ENCODE measurements at regions of chr9 and their contacts with region 1.

Region 1: GRCh38 chr9:125631391-125632085 is 75.5 kb downstream of the MAPKAP1 start:
- DNase-seq: peak; percentile 54
- H3K4me3 Mint-ChIP-seq: no peak overlapping the region
- H3K27ac Mint-ChIP-seq: peak overlapping the region; percentile 67
- H3K4me1 Mint-ChIP-seq: peaks cover 75% of the 10 kb centered on the region
- H3K27me3 Mint-ChIP-seq: no peaks in the 10 kb centered on the region

Region 2: DNA sequence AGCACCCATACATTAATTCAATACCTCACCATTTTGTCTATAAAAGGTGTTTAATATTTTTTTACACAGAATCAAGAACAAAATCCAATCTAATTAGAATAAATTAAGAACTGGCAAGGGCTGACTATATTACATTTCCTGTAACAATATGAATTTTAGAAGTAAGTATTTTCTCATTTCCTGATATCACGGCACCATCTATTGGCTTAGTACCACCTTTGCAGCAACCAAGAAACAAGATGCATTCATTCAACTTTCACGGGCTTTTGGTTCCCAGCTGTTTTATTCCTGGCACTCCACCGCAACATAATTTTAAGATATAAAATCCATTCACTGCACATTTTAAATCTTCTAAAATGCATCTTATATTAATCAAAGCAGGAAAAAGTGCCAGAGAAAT is 1236.9 kb before region 1 on chr9:
- CTCF ChIA-PET with region 1: interaction called, 10 read pairs
- intact Hi-C with region 1: no loop called
- DNase-seq: no peak
- H3K4me3 Mint-ChIP-seq: no peak overlapping the region
- H3K27ac Mint-ChIP-seq: no peak overlapping the region
- H3K4me1 Mint-ChIP-seq: peaks cover 61% of the 10 kb centered on the region
- H3K27me3 Mint-ChIP-seq: no peaks in the 10 kb centered on the region

Region 3: DNA sequence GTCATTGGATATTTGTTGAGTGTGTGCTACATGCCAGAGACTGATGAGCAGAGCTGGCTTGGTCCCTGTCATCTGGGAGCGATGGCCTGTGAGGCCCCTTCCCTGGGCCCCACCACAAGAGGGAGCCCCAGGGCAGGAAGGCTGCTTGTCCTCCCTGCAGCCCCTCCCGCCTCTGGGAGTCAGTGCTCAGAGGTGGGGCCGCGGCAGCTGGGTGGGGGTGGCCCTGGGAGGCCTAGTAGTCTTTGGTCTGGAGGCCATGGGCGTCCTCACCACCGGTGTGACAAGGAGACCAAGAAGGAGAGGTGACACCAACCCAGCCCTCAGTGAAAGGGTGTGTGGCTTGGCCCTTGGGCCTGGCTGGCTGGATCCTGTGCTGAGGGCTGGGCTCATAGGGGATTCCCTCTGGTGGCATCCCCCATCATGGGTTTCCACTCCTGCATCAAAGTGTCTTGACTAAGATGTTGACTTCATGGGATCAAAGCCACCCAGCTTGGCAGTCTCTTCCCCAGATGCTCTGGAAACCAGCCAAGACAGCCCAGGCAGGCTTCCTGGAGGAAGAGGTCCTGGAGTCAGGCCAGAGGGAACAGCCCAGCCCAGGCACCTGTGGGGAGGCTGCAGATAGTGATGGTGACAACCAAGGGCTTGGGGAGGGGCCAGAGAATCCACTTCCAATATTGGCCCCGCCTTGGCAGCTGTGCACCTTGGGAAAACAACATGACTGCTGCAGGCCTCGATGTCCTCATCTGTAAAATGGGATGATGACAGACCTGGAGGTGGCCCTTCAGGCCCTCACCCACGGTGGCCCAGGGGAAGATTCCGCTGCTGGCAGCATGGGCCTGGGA is 203.3 kb before region 1 on chr9:
- CTCF ChIA-PET with region 1: no interaction called
- intact Hi-C with region 1: loop called (anchors 1 kb)
- DNase-seq: peak; percentile 29
- H3K4me3 Mint-ChIP-seq: no peak overlapping the region
- H3K27ac Mint-ChIP-seq: no peak overlapping the region
- H3K4me1 Mint-ChIP-seq: no peaks in the 10 kb centered on the region
- H3K27me3 Mint-ChIP-seq: no peaks in the 10 kb centered on the region

Region 4: GRCh38 chr9:125558453-125559092 is 73.0 kb before region 1 on chr9:
- CTCF ChIA-PET with region 1: interaction called, 10 read pairs
- intact Hi-C with region 1: loop called (anchors 1 kb)
- DNase-seq: peak; percentile 81
- H3K4me3 Mint-ChIP-seq: no peak overlapping the region
- H3K27ac Mint-ChIP-seq: no peak overlapping the region
- H3K4me1 Mint-ChIP-seq: peaks cover 11% of the 10 kb centered on the region
- H3K27me3 Mint-ChIP-seq: no peaks in the 10 kb centered on the region

Region 5: DNA sequence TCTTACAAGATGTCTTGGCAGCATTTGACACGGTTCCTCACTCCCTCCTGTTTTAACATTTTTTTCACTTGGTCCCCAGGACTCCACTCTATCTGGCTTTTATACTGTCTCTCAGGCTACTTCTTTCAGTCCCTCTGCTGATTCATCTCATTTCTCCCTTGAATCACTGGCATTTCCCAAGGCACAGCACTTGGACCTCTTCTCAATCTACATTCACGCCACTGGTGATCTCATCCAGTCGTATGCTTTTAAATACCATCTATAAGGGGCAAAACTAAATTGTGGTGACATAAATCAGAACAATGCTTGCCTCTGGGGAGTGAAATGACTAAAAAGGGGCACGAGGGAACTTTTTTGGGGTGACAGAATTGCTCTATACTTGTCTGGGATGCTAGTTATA is 28.4 kb after region 1 on chr9:
- CTCF ChIA-PET with region 1: no interaction called
- intact Hi-C with region 1: loop called (anchors 1 kb)
- DNase-seq: peak; percentile 49
- H3K4me3 Mint-ChIP-seq: no peak overlapping the region
- H3K27ac Mint-ChIP-seq: no peak overlapping the region
- H3K4me1 Mint-ChIP-seq: peaks cover 15% of the 10 kb centered on the region
- H3K27me3 Mint-ChIP-seq: no peaks in the 10 kb centered on the region

Region 6: GRCh38 chr9:125746017-125746773 is 114.7 kb after region 1 on chr9:
- CTCF ChIA-PET with region 1: no interaction called
- intact Hi-C with region 1: loop called (anchors 2 kb)
- DNase-seq: peak; percentile 93
- H3K4me3 Mint-ChIP-seq: peak overlapping the region; percentile 91
- H3K27ac Mint-ChIP-seq: peak overlapping the region; percentile 90
- H3K4me1 Mint-ChIP-seq: peaks cover 25% of the 10 kb centered on the region
- H3K27me3 Mint-ChIP-seq: peaks cover 6% of the 10 kb centered on the region

Region 7: DNA sequence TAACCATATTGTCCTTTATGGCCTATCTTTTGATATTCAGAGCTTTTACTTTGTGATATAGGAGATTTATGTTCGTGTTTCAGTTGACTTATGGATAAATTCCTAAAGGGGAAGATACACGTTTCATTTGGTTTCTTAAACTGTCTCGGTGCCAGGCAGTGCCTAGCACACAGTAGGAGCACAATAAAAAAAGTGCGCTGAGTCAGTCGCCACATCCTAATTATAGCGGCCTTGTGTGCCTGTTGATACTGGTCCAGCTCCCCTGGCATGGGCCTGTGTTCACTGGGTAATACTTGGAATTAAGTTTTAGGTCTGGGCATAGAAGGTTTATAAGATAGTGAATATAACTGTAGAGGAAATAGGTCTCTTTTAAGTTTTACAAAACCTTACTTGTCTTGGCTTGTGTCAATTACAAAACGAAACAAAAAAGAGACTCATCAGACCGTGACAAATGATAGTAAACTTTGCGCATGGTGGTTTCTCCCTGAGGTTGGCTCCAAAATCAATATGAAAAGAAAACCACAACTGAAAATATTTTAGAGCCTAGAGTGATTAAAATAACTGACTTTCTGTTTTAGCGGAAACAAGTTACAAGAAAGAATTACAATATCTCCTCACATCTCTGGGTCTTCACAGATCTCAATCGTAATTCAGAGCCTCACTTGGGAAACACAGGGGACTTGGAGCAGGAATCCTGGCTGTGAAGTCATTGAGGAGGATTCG is 779.8 kb after region 1 on chr9:
- CTCF ChIA-PET with region 1: no interaction called
- intact Hi-C with region 1: loop called (anchors 2 kb)
- DNase-seq: peak; percentile 68
- H3K4me3 Mint-ChIP-seq: peak overlapping the region; percentile 35
- H3K27ac Mint-ChIP-seq: peak overlapping the region; percentile 72
- H3K4me1 Mint-ChIP-seq: peaks cover 33% of the 10 kb centered on the region
- H3K27me3 Mint-ChIP-seq: no peaks in the 10 kb centered on the region

Measured in activated naive CD4-positive, alpha-beta T cell treated with anti-CD3 and anti-CD28 coated beads for 36 hours (primary cell).